ENCODE measurements at regions of chr2 and their contacts with region 1.

Region 1: GRCh38 chr2:130342533-130343275 is at the start of gene IMP4:
- DNase-seq: peak; percentile 98
- ATAC-seq: peak; percentile 87
- H3K4me3 Mint-ChIP-seq: peak within 1 kb of the TSS; percentile 97
- H3K27ac Mint-ChIP-seq: peak within 1 kb of the TSS; percentile 98
- H3K4me1 Mint-ChIP-seq: peaks cover 29% of the 10 kb centered on the region
- H3K27me3 Mint-ChIP-seq: no peaks in the 10 kb centered on the region
- total RNA-seq, gene IMP4: 85.8 to 115 TPM

Region 2: DNA sequence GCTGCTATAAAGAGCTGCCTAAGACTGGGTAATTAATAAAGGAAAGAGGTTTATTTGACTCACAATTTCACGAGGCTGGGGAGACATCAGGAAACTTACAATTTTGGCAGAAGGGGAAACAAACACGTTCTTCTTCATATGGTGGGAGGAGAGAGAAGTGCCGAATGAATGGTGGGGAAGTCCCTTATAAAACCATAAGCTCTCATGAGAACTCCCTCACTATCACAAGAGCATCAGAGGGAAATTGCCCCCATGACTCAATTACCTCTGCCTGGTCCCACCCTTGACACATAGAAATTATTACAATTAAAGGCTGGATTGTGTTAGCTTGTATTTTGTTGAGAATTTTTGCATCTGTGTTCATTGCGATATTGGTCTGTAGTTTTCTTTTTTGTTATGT is 823.8 kb before region 1 on chr2:
- CTCF ChIA-PET with region 1: no interaction called
- DNase-seq: no peak
- ATAC-seq: no peak
- H3K4me3 Mint-ChIP-seq: no peak overlapping the region
- H3K27ac Mint-ChIP-seq: no peak overlapping the region
- H3K4me1 Mint-ChIP-seq: no peaks in the 10 kb centered on the region
- H3K27me3 Mint-ChIP-seq: no peaks in the 10 kb centered on the region

Region 3: GRCh38 chr2:130181325-130181879 is 161.3 kb before region 1 on chr2 and contains the start of gene SMPD4:
- CTCF ChIA-PET with region 1: interaction called, 14 read pairs
- DNase-seq: peak; percentile 98
- ATAC-seq: peak; percentile 78
- H3K4me3 Mint-ChIP-seq: peak within 1 kb of the TSS; percentile 94
- H3K27ac Mint-ChIP-seq: peak within 1 kb of the TSS; percentile 92
- H3K4me1 Mint-ChIP-seq: peaks cover 37% of the 10 kb centered on the region
- H3K27me3 Mint-ChIP-seq: no peaks in the 10 kb centered on the region
- total RNA-seq, gene SMPD4: 70.8 to 79.8 TPM

Region 4: GRCh38 chr2:130316596-130316995 is 26.1 kb before region 1 on chr2:
- CTCF ChIA-PET with region 1: no interaction called
- DNase-seq: no peak
- ATAC-seq: no peak
- H3K4me3 Mint-ChIP-seq: no peak overlapping the region
- H3K27ac Mint-ChIP-seq: no peak overlapping the region
- H3K4me1 Mint-ChIP-seq: no peaks in the 10 kb centered on the region
- H3K27me3 Mint-ChIP-seq: peaks cover 6% of the 10 kb centered on the region

Region 5: GRCh38 chr2:130332271-130333073 is 10.2 kb before region 1 on chr2:
- CTCF ChIA-PET with region 1: interaction called, 24 read pairs
- DNase-seq: peak; percentile 81
- ATAC-seq: peak; percentile 91
- H3K4me3 Mint-ChIP-seq: no peak overlapping the region
- H3K27ac Mint-ChIP-seq: no peak overlapping the region
- H3K4me1 Mint-ChIP-seq: peaks cover 8% of the 10 kb centered on the region
- H3K27me3 Mint-ChIP-seq: peaks cover 35% of the 10 kb centered on the region

Region 6: DNA sequence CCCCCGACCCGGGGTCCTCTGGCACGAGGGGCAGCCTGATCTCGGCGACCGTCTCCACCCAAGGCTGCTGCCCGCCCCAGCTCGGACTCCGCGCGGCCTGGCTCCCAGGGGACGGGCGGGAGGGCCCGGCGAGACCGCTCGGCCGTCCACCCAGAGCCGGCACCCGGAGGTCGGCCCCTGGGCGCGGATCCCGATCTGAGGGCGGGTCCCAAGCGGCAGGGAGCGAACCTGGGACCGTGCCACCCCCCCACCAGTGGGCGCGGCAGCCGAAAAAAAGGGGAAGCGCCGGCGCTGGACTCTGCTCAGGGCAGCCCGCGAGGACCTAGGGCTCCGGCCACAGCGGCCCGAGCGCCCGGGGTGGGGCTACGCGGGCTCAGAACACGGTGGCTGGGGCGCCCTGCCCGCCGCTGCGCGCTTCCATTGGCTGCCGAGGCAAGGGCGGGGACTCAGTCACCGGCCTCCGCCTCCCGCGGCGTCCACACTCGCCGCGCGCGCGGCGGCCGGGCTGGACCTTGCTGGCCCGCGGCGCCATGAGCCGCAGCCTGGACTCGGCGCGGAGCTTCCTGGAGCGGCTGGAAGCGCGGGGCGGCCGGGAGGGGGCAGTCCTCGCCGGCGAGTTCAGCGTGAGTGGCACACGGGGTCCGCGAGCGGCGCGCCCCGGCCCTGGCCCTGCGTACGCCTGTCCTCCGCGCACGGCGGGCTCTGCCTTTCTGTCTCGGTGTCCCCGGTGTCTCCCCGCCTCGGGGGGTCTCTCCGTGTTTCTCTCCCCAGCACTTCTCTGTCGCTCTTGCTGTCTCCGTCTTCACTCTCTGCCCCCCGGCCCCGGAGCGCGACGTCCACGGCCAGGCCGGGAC is 13.1 kb after region 1 on chr2 and contains the start of gene PTPN18:
- CTCF ChIA-PET with region 1: interaction called, 22 read pairs
- DNase-seq: peak; percentile 72
- ATAC-seq: peak; percentile 97
- H3K4me3 Mint-ChIP-seq: peak within 1 kb of the TSS; percentile 77
- H3K27ac Mint-ChIP-seq: peak within 1 kb of the TSS; percentile 21
- H3K4me1 Mint-ChIP-seq: peaks cover 13% of the 10 kb centered on the region
- H3K27me3 Mint-ChIP-seq: no peaks in the 10 kb centered on the region
- total RNA-seq, gene PTPN18: 82.3 to 90.5 TPM

Region 7: DNA sequence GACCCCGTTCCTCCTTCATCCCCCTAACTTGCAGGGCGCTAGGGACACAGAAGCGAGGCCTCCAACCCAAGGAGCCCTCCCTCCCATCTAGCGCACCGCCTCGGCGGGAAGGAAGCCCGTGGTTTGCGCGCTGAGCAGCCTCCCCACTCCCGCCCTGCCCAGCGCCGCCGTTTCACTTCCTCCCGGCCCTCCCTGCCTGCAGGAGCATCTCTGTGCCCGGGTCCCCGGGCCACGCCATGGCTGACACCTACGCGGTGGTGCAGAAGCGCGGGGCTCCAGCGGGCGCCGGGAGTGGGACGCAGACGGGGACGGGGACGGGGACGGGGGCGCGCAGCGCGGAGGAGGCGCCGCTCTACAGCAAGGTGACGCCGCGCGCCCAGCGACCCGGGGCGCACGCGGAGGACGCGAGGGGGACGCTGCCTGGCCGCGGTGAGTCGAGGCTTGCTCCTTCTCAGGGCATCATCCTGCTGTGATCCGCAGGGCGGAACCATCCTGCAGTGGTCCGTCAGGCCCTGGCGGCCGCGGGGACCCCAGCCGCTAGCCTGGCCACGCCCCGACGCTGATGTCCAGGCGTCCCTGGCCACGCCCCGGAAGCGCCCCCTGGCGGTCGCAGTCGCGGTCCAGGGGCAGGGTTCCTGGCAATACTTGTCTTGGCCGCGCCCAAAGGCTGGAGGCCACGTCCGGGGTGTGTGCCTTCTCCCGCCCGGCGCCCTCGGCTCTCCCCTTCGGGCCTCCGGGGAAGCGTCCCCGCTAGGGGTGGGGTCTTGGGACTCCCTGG is 29.5 kb after region 1 on chr2:
- CTCF ChIA-PET with region 1: interaction called, 24 read pairs
- DNase-seq: peak; percentile 86
- ATAC-seq: peak; percentile 72
- H3K4me3 Mint-ChIP-seq: peak overlapping the region; percentile 96
- H3K27ac Mint-ChIP-seq: peak overlapping the region; percentile 99
- H3K4me1 Mint-ChIP-seq: peaks cover 62% of the 10 kb centered on the region
- H3K27me3 Mint-ChIP-seq: no peaks in the 10 kb centered on the region